ENCODE measurements at regions of chr6 and their contacts with region 1.

Region 1: GRCh38 chr6:27838058-27838944 is 73.9 kb downstream of the OR2B2 start:
- H3K4me3 ChIP-seq: peak overlapping the region; percentile 65
- H3K27ac ChIP-seq: peak overlapping the region; percentile 90
- H3K4me1 ChIP-seq: no peaks in the 10 kb centered on the region
- CTCF ChIP-seq: no peak; the same call in 1 of the 2 replicates

Region 2: DNA sequence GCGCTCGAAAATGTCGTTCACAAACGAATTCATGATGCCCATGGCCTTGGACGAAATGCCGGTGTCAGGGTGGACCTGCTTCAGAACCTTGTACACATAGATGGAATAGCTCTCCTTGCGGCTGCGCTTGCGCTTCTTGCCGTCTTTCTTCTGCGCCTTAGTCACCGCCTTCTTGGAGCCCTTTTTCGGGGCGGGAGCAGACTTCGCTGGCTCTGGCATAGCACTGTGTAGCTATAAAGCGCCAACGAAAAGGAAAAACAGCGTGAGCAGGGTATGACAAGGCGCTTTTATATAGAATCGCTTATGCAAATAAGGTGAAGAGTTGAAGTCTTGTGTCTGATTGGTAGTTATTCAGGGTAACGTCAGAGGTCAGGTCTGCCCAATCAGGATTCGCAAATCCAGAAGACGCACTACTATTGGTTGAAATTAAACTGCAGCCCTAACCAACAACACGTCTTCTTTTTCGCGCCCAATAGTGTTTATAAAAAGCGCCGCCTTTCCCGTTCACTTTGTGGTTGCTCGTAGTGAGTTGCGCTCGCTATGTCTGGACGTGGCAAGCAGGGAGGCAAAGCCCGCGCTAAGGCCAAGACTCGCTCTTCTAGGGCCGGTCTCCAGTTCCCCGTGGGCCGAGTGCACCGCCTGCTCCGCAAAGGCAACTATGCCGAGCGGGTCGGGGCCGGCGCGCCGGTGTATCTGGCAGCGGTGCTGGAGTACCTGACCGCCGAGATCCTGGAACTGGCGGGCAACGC is 705.6 kb before region 1 on chr6:
- CTCF ChIA-PET with region 1: no interaction called
- POLR2A ChIA-PET with region 1: interaction called, 18 read pairs
- H3K4me3 ChIP-seq: peak overlapping the region; percentile 71
- H3K27ac ChIP-seq: peak overlapping the region; percentile 95
- H3K4me1 ChIP-seq: peaks cover 10% of the 10 kb centered on the region
- CTCF ChIP-seq: no peak

Region 3: GRCh38 chr6:27825025-27825793 is 13.1 kb before region 1 on chr6:
- CTCF ChIA-PET with region 1: interaction called, 4 read pairs
- POLR2A ChIA-PET with region 1: interaction called, 88 read pairs
- H3K4me3 ChIP-seq: peak overlapping the region; percentile 49
- H3K27ac ChIP-seq: no peak overlapping the region
- H3K4me1 ChIP-seq: no peaks in the 10 kb centered on the region
- CTCF ChIP-seq: no peak

Region 4: DNA sequence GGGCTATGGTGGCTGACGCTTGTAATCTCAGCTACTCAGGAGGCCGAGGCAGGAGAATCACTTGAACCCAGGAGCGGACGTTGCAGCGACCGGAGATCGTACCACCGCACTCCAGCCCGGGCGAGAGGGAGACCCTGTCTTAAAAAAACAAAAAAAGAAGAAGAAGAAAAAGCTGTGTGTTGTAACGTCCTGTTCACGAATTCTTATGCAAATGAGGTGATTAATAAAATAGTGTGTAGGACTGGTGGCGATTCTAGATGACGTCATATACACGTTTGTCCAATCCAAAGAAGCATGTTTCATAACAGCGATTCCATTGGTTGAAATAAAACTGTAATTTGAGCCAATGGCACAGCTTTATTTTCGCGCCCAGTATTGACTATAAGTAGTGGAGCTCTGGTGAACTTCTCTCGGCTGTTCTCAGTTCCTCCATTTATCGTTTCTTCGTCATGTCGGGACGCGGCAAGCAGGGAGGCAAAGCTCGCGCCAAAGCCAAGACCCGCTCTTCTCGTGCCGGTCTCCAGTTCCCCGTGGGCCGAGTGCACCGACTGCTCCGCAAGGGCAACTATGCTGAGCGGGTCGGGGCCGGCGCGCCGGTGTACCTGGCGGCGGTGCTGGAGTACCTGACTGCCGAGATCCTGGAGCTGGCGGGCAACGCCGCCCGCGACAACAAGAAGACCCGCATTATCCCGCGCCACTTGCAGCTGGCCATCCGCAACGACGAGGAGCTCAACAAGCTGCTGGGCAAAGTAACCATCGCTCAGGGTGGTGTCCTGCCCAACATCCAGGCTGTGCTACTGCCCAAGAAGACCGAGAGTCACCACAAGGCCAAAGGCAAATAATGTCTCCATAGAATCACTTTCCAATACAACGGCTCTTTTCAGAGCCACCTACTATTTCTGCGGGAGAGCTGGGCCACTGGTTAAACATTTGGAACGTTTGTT is 26.9 kb after region 1 on chr6:
- CTCF ChIA-PET with region 1: interaction called, 4 read pairs
- POLR2A ChIA-PET with region 1: interaction called, 189 read pairs
- H3K4me3 ChIP-seq: peak overlapping the region; percentile 78
- H3K27ac ChIP-seq: peak overlapping the region; percentile 63
- H3K4me1 ChIP-seq: no peaks in the 10 kb centered on the region
- CTCF ChIP-seq: no peak

Region 5: GRCh38 chr6:27871924-27872638 is 33.8 kb after region 1 on chr6:
- CTCF ChIA-PET with region 1: no interaction called
- POLR2A ChIA-PET with region 1: interaction called, 189 read pairs
- H3K4me3 ChIP-seq: peak overlapping the region; percentile 41
- H3K27ac ChIP-seq: 0 out of 2 replicates have a peak overlapping the region, but pooled peaks have one; percentile 13
- H3K4me1 ChIP-seq: no peaks in the 10 kb centered on the region
- CTCF ChIP-seq: no peak

Region 6: GRCh38 chr6:28053584-28053983 is 215.3 kb after region 1 on chr6:
- CTCF ChIA-PET with region 1: no interaction called
- POLR2A ChIA-PET with region 1: no interaction called
- H3K4me3 ChIP-seq: no peak overlapping the region
- H3K27ac ChIP-seq: no peak overlapping the region
- H3K4me1 ChIP-seq: no peaks in the 10 kb centered on the region
- CTCF ChIP-seq: no peak

Measured in HEK293 (cell line).